ENCODE measurements at regions of chr6 and their contacts with region 1.

Region 1: DNA sequence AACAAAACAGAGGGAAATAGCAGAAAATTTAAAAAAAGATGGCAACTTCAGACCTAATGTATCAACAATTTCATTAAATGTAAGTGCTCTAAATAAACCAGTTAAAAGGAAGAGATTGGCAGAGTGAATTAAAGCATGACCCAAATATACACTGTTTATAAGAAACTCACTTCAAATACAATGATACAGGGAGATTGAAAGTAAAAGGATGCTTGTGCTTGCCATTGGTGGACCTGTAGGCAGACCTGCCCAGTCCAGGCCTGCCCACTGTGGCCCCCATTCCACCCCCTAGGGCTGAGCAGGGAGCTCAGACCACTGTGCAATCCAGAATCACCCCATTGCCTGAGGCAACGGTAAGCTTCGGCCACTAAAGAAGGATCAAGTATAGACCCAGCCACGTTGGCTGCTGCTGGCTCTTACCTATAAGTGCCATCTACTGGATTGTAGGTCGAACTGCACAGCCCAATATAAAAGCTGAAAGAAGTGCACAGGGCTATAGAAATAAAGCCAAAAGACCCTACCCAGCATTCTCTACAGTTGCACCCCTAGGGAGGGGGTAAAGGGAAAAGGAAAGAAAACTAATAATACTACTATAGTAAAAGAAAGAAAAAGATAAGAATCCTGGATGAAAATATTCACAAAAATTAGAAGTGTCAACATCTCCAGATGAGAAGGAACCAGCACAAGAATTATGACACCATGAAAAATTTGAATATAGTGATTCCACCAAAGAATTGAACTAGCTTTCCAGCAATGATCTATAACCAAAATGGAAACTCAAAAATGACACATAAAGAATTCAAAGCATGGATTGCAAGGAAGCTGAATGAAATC is 36.1 kb downstream of the PSMB1 start:
- DNase-seq: peak; percentile 59
- H3K4me3 ChIP-seq: no peak overlapping the region
- H3K27ac ChIP-seq: no peak overlapping the region
- H3K4me1 ChIP-seq: no peaks in the 10 kb centered on the region
- H3K27me3 ChIP-seq: peaks cover 2 to 7% of the 10 kb centered on the region in 2 experiments
- CTCF ChIP-seq: peak; percentile 60 to 76
- POLR2A ChIP-seq: no peak

Region 2: DNA sequence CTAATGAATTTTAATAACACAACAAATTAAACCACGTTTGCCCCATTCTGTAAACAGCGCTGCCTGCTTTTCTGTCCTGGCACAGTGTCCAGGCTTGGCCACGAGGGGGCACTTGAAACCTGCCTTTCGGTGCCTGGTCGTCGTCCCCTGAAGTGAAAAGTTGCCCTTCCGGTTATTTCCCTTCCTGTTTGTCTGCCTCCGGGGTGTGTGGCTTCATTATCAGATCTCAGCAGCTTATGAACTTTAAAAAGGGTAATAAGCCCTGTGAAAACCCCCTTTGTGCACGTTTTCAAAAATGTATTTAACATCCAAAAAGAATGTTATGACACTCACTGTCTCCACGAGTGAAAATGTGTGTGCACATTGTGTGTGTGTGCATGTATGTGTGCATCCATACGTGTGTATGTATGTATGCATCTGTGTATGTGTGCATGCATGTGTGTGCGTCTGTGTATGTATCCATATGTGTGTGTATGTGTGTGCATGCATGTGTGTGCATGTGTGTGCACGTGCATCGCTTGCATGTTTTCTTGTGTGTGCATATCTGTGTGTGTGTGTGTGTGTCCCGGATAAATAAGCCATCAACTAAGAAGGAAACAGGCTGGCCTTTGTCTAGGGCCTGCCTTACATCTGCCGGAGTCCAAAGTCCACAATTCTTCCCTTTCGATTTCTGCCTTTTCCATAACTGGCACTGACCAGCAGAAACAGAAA is 1621.7 kb before region 1 on chr6:
- CTCF ChIA-PET with region 1: interaction called, 4 read pairs
- POLR2A ChIA-PET with region 1: no interaction called
- dilution Hi-C with region 1: no loop called
- intact Hi-C with region 1: loop called (anchors 1 kb)
- DNase-seq: peak; percentile 44
- H3K4me3 ChIP-seq: no peak overlapping the region
- H3K27ac ChIP-seq: no peak overlapping the region
- H3K4me1 ChIP-seq: no peaks in the 10 kb centered on the region
- H3K27me3 ChIP-seq: no peaks in the 10 kb centered on the region
- CTCF ChIP-seq: peak; percentile 88
- POLR2A ChIP-seq: no peak

Region 3: GRCh38 chr6:169789982-169790927 is 726.7 kb before region 1 on chr6:
- CTCF ChIA-PET with region 1: interaction called, 63 read pairs
- POLR2A ChIA-PET with region 1: no interaction called
- dilution Hi-C with region 1: no loop called
- intact Hi-C with region 1: loop called (anchors 1 kb)
- DNase-seq: peak; percentile 75
- H3K4me3 ChIP-seq: peak overlapping the region; percentile 14 to 33 (median 24)
- H3K27ac ChIP-seq: no peak overlapping the region
- H3K4me1 ChIP-seq: peaks cover 6% of the 10 kb centered on the region
- H3K27me3 ChIP-seq: peaks cover 0 to 4% of the 10 kb centered on the region in 2 experiments
- CTCF ChIP-seq: peak; percentile 97 to 99
- POLR2A ChIP-seq: no peak

Region 4: GRCh38 chr6:169959136-169960002 is 557.6 kb before region 1 on chr6:
- CTCF ChIA-PET with region 1: interaction called, 14 read pairs
- POLR2A ChIA-PET with region 1: no interaction called
- dilution Hi-C with region 1: no loop called
- intact Hi-C with region 1: loop called (anchors 2 kb)
- DNase-seq: peak; percentile 26
- H3K4me3 ChIP-seq: no peak overlapping the region
- H3K27ac ChIP-seq: no peak overlapping the region
- H3K4me1 ChIP-seq: peaks cover 4% of the 10 kb centered on the region
- H3K27me3 ChIP-seq: peaks cover 0 to 3% of the 10 kb centered on the region in 2 experiments
- CTCF ChIP-seq: peak in 1 of 2 donors; percentile 10
- POLR2A ChIP-seq: no peak

Region 5: DNA sequence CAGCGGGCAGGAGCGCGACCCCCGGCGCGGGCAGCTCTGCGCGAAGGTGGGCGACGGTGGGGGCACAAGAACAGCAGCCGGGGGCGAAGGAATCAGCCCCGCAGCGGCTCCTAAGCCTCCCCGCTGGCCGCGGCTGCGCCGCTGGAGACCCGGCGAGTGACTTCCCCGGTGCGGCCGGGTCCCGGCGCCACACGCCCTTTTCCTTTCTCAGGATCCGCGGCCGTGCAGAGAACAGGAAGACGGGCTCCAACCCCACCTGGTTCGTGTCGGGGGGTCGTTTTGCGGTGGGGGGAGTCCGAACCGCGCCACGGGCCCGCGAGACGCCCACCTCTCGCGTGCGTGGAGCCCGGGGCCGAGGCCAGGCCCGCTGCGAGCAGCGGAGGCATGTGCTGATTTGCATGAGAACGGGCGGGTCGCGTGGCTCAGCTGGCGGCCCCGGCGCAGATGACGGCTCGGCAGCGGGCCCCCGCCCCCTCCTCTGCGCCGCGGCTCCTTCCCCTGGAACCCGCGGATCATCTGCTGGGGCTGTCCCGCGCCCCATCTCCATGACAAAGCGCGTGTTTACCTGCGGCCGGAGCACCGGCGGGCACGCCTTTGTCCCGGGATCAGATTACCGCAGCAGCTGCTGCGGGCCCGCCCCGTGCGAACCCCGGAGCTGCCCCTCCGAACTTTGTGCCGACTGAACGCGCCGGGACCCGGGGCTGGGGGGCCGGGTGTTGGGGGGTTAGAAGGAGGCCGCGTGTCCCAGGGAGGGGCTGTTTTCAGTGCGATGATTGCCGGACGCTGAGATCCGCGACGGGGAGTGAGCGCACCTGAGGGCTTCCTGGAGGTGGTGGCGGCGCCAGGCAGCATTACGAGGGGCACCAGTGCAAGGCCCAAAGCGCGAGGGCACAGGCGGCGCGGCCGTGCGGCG is 221.2 kb before region 1 on chr6:
- CTCF ChIA-PET with region 1: interaction called, 13 read pairs
- POLR2A ChIA-PET with region 1: no interaction called
- dilution Hi-C with region 1: no loop called
- intact Hi-C with region 1: no loop called
- DNase-seq: peak; percentile 21
- H3K4me3 ChIP-seq: peak overlapping the region; percentile 14 to 36 (median 34)
- H3K27ac ChIP-seq: no peak overlapping the region
- H3K4me1 ChIP-seq: peaks cover 17% of the 10 kb centered on the region
- H3K27me3 ChIP-seq: peaks cover 29 to 62% of the 10 kb centered on the region in 2 experiments
- CTCF ChIP-seq: no peak
- POLR2A ChIP-seq: no peak

Region 6: DNA sequence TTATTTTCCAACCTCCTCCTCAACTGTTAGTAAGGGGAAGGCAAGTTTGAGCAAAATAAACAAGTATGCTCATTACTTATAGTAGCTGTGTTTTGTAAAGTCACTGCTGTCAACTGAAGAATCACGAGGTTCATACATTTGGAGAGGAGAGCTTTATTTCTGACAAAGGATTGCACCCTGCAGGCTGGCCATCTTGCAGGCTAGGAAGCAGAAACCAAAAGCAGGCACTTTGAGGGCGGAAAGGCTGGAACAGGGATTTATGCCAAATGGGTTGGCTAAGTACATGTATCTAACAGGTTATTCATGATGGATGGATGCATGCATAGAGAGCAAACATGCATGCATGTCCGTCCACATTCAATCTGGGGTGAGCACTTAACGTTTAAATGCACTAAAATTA is 10.6 kb before region 1 on chr6:
- CTCF ChIA-PET with region 1: interaction called, 11 read pairs
- POLR2A ChIA-PET with region 1: no interaction called
- dilution Hi-C with region 1: no loop called
- intact Hi-C with region 1: no loop called
- DNase-seq: no peak
- H3K4me3 ChIP-seq: no peak overlapping the region
- H3K27ac ChIP-seq: no peak overlapping the region
- H3K4me1 ChIP-seq: no peaks in the 10 kb centered on the region
- H3K27me3 ChIP-seq: no peaks in the 10 kb centered on the region
- CTCF ChIP-seq: no peak
- POLR2A ChIP-seq: no peak

Region 7: GRCh38 chr6:170552765-170553533 is 35.9 kb after region 1 on chr6 and contains the start of gene PSMB1:
- CTCF ChIA-PET with region 1: no interaction called
- POLR2A ChIA-PET with region 1: no interaction called
- dilution Hi-C with region 1: no loop called
- intact Hi-C with region 1: no loop called
- DNase-seq: peak; percentile 94
- H3K4me3 ChIP-seq: peak within 1 kb of the TSS; percentile 51 to 89 (median 76)
- H3K27ac ChIP-seq: peak within 1 kb of the TSS; percentile 84
- H3K4me1 ChIP-seq: peaks cover 22% of the 10 kb centered on the region
- H3K27me3 ChIP-seq: no peaks in the 10 kb centered on the region
- CTCF ChIP-seq: no peak
- POLR2A ChIP-seq: peak; percentile 95
- total RNA-seq, gene PSMB1: 182 and 198 TPM in 2 replicates

Measured in endothelial cell of umbilical vein (primary cell).